Gastrocnemius medialis (tissue), 4 donors: ENCODE measurements at regions of chr14 and their contacts with region 1.

Region 1: GRCh38 chr14:63276492-63277342 is 42.0 kb downstream of the GPHB5 start:
- DNase-seq: no peak
- ATAC-seq: peak in 1 of 2 donors; percentile 46
- H3K4me3 ChIP-seq: no peak overlapping the region
- H3K27ac ChIP-seq: peak overlapping the region in 1 of 4 donors; percentile 30
- H3K4me1 ChIP-seq: peaks cover 5 to 7% of the 10 kb centered on the region in 2 donors
- H3K27me3 ChIP-seq: no peaks in the 10 kb centered on the region
- CTCF ChIP-seq: peak; percentile 50 to 71 (median 61)
- POLR2A ChIP-seq: no peak

Region 2: GRCh38 chr14:62162998-62163589 is 1113.6 kb before region 1 on chr14:
- in situ Hi-C with region 1: loop called in 1 of 4 experiments (anchors 10 kb)
- intact Hi-C with region 1: no loop called
- DNase-seq: no peak
- ATAC-seq: no peak
- H3K4me3 ChIP-seq: no peak overlapping the region
- H3K27ac ChIP-seq: no peak overlapping the region
- H3K4me1 ChIP-seq: no peaks in the 10 kb centered on the region
- H3K27me3 ChIP-seq: no peaks in the 10 kb centered on the region
- CTCF ChIP-seq: peak in 3 of 5 experiments; percentile 19 to 49 (median 47)
- POLR2A ChIP-seq: no peak

Region 3: GRCh38 chr14:62179367-62180018 is 1097.2 kb before region 1 on chr14:
- in situ Hi-C with region 1: loop called in 1 of 4 experiments (anchors 25 kb)
- intact Hi-C with region 1: no loop called
- DNase-seq: peak in 1 of 2 donors; percentile 16
- ATAC-seq: no peak
- H3K4me3 ChIP-seq: no peak overlapping the region
- H3K27ac ChIP-seq: no peak overlapping the region
- H3K4me1 ChIP-seq: no peaks in the 10 kb centered on the region
- H3K27me3 ChIP-seq: no peaks in the 10 kb centered on the region
- CTCF ChIP-seq: peak in 1 of 5 experiments; percentile 20
- POLR2A ChIP-seq: no peak

Region 4: GRCh38 chr14:63174760-63175211 is 101.9 kb before region 1 on chr14:
- in situ Hi-C with region 1: loop called (anchors 5 to 10 kb)
- intact Hi-C with region 1: loop called (anchors 2 kb)
- DNase-seq: no peak
- ATAC-seq: peak in 1 of 2 donors; percentile 45
- H3K4me3 ChIP-seq: no peak overlapping the region
- H3K27ac ChIP-seq: no peak overlapping the region
- H3K4me1 ChIP-seq: no peaks in the 10 kb centered on the region
- H3K27me3 ChIP-seq: no peaks in the 10 kb centered on the region
- CTCF ChIP-seq: peak in 4 of 5 experiments; percentile 38 to 61 (median 51)
- POLR2A ChIP-seq: no peak

Region 5: DNA sequence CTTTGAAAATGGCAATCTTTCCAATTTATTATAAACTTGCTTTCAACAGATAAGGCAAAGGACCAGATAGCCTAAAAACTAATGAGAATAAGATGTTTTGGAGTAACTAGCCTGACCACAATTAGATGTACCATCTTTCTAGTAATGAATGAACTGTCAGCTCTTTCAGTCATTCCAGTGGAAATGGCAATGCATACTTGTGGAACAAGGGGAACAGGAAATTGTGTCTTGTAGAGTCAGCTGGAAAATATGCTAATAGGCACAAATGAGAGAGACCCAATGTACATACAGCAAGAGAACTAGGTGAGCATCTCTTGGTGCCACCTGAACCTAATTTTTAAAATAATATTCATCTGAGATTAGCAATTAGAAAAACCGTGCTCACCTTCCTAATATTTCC is 118.1 kb after region 1 on chr14:
- in situ Hi-C with region 1: no loop called
- intact Hi-C with region 1: no loop called
- DNase-seq: no peak
- ATAC-seq: no peak
- H3K4me3 ChIP-seq: no peak overlapping the region
- H3K27ac ChIP-seq: no peak overlapping the region
- H3K4me1 ChIP-seq: no peaks in the 10 kb centered on the region
- H3K27me3 ChIP-seq: no peaks in the 10 kb centered on the region
- CTCF ChIP-seq: no peak
- POLR2A ChIP-seq: no peak